Activated B cell treated with CpG ODN at 0.5 μM for 24 hours (primary cell): ENCODE measurements at regions of chr6 and their contacts with region 1.

Region 1: GRCh38 chr6:32195652-32195901 is 3.1 kb upstream of the GPSM3 start:
- DNase-seq: peak; percentile 99
- ATAC-seq: peak; percentile 83
- H3K4me3 Mint-ChIP-seq: peak overlapping the region; percentile 99
- H3K27ac Mint-ChIP-seq: peak overlapping the region; percentile 100
- H3K4me1 Mint-ChIP-seq: peaks cover 57% of the 10 kb centered on the region
- H3K27me3 Mint-ChIP-seq: peaks cover 1% of the 10 kb centered on the region
- CTCF ChIP-seq: no peak

Region 2: DNA sequence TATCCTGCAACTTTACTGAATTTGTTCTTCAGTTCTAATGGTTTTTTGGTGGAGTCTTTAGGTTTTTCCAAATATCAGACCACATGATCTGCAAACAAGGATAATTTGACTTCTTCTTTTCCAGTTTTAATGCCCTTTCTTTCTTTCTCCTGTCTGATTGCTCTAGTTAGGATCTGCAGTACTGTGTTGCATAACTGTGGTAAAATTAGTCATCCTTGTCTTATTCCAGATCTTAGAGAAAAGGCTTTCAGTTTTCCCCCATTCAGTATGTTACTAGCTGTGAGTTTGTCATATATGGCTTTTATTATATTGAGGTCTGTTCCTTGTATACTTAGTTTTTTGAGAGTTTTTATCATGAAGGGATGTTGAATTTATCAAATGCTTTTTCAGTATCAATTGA is 787.9 kb before region 1 on chr6:
- CTCF ChIA-PET with region 1: no interaction called
- POLR2A ChIA-PET with region 1: no interaction called
- intact Hi-C with region 1: no loop called
- DNase-seq: no peak
- ATAC-seq: no peak
- H3K4me3 Mint-ChIP-seq: no peak overlapping the region
- H3K27ac Mint-ChIP-seq: no peak overlapping the region
- H3K4me1 Mint-ChIP-seq: peaks cover 46% of the 10 kb centered on the region
- H3K27me3 Mint-ChIP-seq: no peaks in the 10 kb centered on the region
- CTCF ChIP-seq: no peak

Region 3: GRCh38 chr6:31958741-31959739 is 236.5 kb before region 1 on chr6 and contains the starts of genes NELFE and SKIC2:
- CTCF ChIA-PET with region 1: no interaction called
- POLR2A ChIA-PET with region 1: interaction called, 6 read pairs
- intact Hi-C with region 1: loop called (anchors 1 kb)
- DNase-seq: peak; percentile 96
- ATAC-seq: peak; percentile 98
- H3K4me3 Mint-ChIP-seq: peak within 1 kb of the TSS; percentile 95
- H3K27ac Mint-ChIP-seq: peak within 1 kb of the TSS; percentile 94
- H3K4me1 Mint-ChIP-seq: peaks cover 33% of the 10 kb centered on the region
- H3K27me3 Mint-ChIP-seq: no peaks in the 10 kb centered on the region
- CTCF ChIP-seq: no peak
- total RNA-seq, gene NELFE: 57.9 and 63.3 TPM in 2 replicates
- total RNA-seq, gene SKIC2: 95.8 and 102 TPM in 2 replicates

Region 4: DNA sequence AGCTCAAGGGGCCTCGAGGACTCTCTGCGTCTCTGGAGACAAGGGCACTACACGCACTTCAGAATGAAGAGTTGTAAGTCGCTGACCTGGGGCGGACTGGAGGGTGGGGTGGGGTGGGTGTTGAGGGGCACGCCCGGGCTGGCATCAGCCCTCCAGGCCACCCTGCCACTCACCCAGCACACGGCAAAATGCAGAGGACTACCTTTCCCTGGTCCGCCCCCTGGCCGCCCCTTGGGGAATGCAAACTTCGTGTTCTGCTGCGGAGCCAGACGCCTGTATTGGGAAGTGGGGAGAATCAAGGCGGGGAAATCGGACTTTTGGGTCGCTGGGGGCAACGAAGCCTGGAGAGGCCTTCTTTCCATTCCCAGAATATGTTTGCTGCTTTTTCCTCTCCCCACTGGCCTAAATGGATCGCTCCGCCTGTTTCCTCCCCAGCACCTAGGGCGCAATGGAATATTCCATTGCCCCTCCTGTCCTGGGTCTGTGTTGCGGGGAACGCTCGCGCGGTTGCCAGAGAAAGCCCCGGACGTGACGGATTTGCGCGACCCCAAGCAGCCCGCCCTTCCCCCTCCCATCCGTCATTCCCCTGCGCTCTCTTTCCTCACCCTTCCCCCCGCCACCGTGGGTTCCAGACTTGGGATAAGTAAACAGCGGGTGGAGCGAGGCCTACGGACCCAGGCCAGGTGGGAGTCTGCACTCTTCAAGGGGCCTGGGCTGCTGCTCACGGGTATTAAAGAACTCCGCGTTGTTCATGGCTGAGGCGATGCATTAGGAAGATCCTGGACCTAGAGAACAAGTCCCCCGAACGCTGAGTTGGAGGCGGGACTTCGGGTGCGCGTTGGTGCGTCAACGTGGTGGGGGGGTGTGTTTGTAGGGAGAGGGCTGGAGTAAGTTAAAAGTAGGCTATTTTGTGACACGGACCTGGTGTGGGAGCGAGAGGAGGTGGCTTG is 41.7 kb before region 1 on chr6 and contains the start of gene PPT2:
- CTCF ChIA-PET with region 1: interaction called, 4 read pairs
- POLR2A ChIA-PET with region 1: interaction called, 5 read pairs
- intact Hi-C with region 1: loop called (anchors 1 kb)
- DNase-seq: peak; percentile 60
- ATAC-seq: peak; percentile 49
- H3K4me3 Mint-ChIP-seq: peak within 1 kb of the TSS; percentile 96
- H3K27ac Mint-ChIP-seq: peak within 1 kb of the TSS; percentile 59
- H3K4me1 Mint-ChIP-seq: peaks cover 33% of the 10 kb centered on the region
- H3K27me3 Mint-ChIP-seq: peaks cover 29% of the 10 kb centered on the region
- CTCF ChIP-seq: no peak
- total RNA-seq, gene PPT2: 1.8 and 3.0 TPM in 2 replicates

Region 5: GRCh38 chr6:32166411-32167061 is 29.0 kb before region 1 on chr6:
- CTCF ChIA-PET with region 1: no interaction called
- POLR2A ChIA-PET with region 1: no interaction called
- intact Hi-C with region 1: no loop called
- DNase-seq: no peak
- ATAC-seq: no peak
- H3K4me3 Mint-ChIP-seq: no peak overlapping the region
- H3K27ac Mint-ChIP-seq: no peak overlapping the region
- H3K4me1 Mint-ChIP-seq: peaks cover 4% of the 10 kb centered on the region
- H3K27me3 Mint-ChIP-seq: no peaks in the 10 kb centered on the region
- CTCF ChIP-seq: no peak

Region 6: DNA sequence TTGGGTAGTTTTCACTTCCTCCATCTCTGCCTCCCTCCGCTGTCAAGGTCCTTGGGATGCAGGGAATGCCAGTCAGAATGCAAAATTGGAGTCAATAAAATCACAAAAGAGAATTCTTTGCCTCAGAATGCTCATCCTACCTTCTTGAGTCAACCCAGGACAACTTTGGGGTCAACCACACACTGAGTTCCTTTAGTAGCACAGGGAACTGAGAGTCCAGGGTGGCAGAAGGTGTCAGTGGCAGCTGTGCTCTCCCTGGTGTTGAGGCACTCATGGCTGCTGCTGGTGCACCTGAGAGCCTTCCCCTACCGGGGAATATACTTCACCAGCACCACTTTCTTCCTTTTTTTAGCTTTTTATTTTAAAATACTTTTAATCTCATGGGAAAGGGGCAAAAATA is 29.1 kb after region 1 on chr6:
- CTCF ChIA-PET with region 1: no interaction called
- POLR2A ChIA-PET with region 1: interaction called, 9 read pairs
- intact Hi-C with region 1: loop called (anchors 2 kb)
- DNase-seq: no peak
- ATAC-seq: peak; percentile 83
- H3K4me3 Mint-ChIP-seq: peak overlapping the region; percentile 2
- H3K27ac Mint-ChIP-seq: peak overlapping the region; percentile 83
- H3K4me1 Mint-ChIP-seq: peaks cover 75% of the 10 kb centered on the region
- H3K27me3 Mint-ChIP-seq: no peaks in the 10 kb centered on the region
- CTCF ChIP-seq: no peak

Region 7: DNA sequence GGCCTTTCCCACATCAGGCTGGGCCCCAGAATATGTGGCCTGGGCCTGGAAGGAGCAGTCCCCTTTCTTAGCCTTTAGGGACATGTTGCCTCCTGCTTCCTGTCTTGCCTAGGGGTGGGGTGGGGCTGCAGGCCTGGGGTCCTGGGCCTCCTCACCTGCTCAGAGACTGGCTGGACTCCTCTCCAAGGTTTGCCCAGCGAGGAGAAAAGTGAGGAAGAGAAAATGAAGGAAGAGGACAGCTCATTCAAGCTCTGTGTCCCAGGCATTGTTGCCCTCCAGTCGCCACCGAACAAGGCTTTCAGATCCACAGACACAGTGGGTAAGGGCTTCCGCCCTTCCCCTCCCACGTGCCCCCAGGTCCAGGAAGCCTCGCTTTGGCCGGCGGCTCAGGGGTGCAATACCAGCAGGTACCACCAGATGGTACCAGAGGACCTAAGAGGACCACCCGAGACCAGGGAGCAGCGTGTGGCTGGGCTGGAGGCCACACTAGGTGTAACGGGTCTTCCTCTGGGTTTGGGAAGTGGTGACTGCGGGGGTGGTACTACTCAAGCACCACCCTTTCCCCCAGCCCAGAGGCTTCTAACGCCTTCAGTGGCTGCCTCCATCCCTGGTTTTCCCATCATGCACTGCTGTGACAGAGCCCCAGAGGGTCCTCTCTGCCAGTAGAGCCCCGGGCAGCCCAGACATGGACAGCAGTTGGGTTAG is 1390.0 kb after region 1 on chr6:
- CTCF ChIA-PET with region 1: no interaction called
- POLR2A ChIA-PET with region 1: no interaction called
- intact Hi-C with region 1: loop called (anchors 5 kb)
- DNase-seq: peak; percentile 90
- ATAC-seq: peak; percentile 94
- H3K4me3 Mint-ChIP-seq: peak overlapping the region; percentile 61
- H3K27ac Mint-ChIP-seq: peak overlapping the region; percentile 93
- H3K4me1 Mint-ChIP-seq: peaks cover 31% of the 10 kb centered on the region
- H3K27me3 Mint-ChIP-seq: no peaks in the 10 kb centered on the region
- CTCF ChIP-seq: peak; percentile 96